ENCODE measurements at regions of chr11 and their contacts with region 1.

Region 1: GRCh38 chr11:62081378-62082291 is 42.2 kb upstream of the INCENP start:
- DNase-seq: peak; percentile 90
- ATAC-seq: peak; percentile 92
- H3K4me3 Mint-ChIP-seq: no peak overlapping the region
- H3K27ac Mint-ChIP-seq: no peak overlapping the region
- H3K4me1 Mint-ChIP-seq: peaks cover 8% of the 10 kb centered on the region
- H3K27me3 Mint-ChIP-seq: no peaks in the 10 kb centered on the region

Region 2: DNA sequence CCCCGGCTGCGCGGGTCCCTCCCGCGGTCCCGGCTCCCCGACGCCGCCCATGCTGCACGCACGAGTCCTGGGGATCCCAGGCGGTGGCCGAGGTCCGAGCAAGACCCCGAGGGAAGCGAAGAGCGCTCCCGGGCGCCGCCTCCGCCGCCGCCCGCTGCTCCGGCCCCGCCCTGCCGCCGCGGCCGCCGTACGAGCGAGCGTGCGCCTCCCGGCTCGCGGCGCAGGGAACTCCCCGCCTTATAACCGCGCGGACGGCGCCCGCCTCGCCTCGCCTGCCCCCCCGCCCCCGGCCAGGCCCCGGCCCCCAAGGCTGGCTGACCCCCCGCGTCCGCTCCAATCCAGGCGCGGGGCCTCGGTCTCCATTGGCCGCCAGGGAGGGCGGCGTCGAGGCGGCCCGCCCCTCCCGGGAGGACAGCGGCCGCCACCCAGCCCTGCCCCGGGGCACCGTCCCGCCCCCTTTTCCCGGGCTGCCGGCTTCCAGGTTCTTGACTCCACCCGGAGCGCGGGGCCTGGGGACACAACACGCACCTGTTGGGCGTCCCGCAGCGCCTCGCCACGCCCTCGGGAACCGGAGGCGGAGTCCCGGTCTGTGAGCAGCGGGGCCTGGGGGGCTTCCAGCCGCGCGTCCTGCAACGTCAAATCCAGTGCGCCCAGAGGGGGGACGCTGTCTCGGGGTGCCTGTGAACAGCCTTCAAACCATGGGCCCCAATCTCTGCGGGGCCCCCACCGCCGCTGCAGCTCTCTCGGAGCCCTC is 190.1 kb before region 1 on chr11 and contains the start of gene FADS3:
- CTCF ChIA-PET with region 1: interaction called, 232 read pairs
- POLR2A ChIA-PET with region 1: no interaction called
- intact Hi-C with region 1: no loop called
- DNase-seq: peak; percentile 68
- ATAC-seq: peak; percentile 74
- H3K4me3 Mint-ChIP-seq: peak within 1 kb of the TSS; percentile 76
- H3K27ac Mint-ChIP-seq: peak within 1 kb of the TSS; percentile 58
- H3K4me1 Mint-ChIP-seq: peaks cover 2% of the 10 kb centered on the region
- H3K27me3 Mint-ChIP-seq: no peaks in the 10 kb centered on the region
- total RNA-seq, gene FADS3: 7.2 to 10.1 TPM

Region 3: GRCh38 chr11:61916737-61917340 is 164.8 kb before region 1 on chr11:
- CTCF ChIA-PET with region 1: interaction called, 12 read pairs
- POLR2A ChIA-PET with region 1: no interaction called
- intact Hi-C with region 1: no loop called
- DNase-seq: no peak
- ATAC-seq: peak; percentile 27
- H3K4me3 Mint-ChIP-seq: no peak overlapping the region
- H3K27ac Mint-ChIP-seq: no peak overlapping the region
- H3K4me1 Mint-ChIP-seq: peaks cover 4% of the 10 kb centered on the region
- H3K27me3 Mint-ChIP-seq: peaks cover 49% of the 10 kb centered on the region

Region 4: DNA sequence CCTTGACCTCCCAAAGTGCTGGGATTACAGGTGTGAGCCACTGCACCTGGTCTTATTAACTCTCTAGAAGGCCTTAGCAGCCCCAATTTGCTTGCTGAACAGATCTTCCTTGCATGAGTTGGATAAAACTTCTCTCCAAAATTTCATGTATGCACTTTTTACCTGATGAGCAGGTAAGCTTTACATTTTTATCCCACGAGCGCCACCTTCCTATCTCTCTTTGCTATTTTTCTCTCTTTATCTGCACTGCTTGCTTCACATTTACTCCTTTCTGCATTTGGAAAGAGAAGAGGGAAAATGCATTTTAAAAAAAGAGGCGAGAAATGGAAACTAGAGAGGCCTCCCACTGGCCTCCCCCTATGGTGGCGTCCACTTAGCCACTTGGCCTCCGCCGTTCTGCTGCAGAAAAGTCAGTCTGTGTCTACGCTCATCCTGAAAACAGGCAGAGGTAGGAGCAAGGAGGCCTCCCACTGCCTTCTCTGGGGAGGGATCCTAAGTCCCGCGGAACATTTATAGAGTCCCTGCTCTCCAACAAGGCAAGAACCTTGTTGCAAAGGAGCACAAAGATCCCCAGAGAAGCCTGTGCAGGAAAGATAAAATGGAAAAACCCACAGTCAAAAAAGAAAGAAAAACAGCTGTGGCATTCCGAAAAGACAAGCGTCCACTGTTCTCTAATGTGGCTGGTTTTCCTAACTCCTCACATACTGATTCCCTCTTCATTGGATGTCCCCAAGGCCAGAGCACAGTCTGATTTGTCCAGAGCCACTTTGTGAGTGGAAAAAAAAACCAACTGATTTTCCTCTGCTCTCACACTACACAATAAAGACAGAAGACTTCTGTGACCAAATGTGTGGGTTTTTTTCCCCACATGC is 20.0 kb before region 1 on chr11:
- CTCF ChIA-PET with region 1: interaction called, 10 read pairs
- POLR2A ChIA-PET with region 1: no interaction called
- intact Hi-C with region 1: no loop called
- DNase-seq: no peak
- ATAC-seq: no peak
- H3K4me3 Mint-ChIP-seq: no peak overlapping the region
- H3K27ac Mint-ChIP-seq: no peak overlapping the region
- H3K4me1 Mint-ChIP-seq: no peaks in the 10 kb centered on the region
- H3K27me3 Mint-ChIP-seq: peaks cover 2% of the 10 kb centered on the region

Measured in activated CD4-positive, alpha-beta T cell treated with anti-CD3 and anti-CD28 coated beads for 36 hours (primary cell).